Transverse colon (tissue), 4 donors: ENCODE measurements at regions of chr10 and their contacts with region 1.

Region 1: GRCh38 chr10:123213192-123213591 is 59.0 kb downstream of the BUB3 start:
- DNase-seq: no peak
- H3K4me3 ChIP-seq: no peak overlapping the region
- H3K27ac ChIP-seq: no peak overlapping the region
- H3K4me1 ChIP-seq: no peaks in the 10 kb centered on the region
- H3K27me3 ChIP-seq: no peaks in the 10 kb centered on the region
- CTCF ChIP-seq: no peak
- EP300 ChIP-seq: no peak
- POLR2A ChIP-seq: no peak

Region 2: GRCh38 chr10:123166618-123167017 is 46.6 kb before region 1 on chr10:
- in situ Hi-C with region 1: no loop called
- intact Hi-C with region 1: no loop called
- DNase-seq: no peak
- H3K4me3 ChIP-seq: no peak overlapping the region
- H3K27ac ChIP-seq: no peak overlapping the region
- H3K4me1 ChIP-seq: no peaks in the 10 kb centered on the region
- H3K27me3 ChIP-seq: no peaks in the 10 kb centered on the region
- CTCF ChIP-seq: no peak
- EP300 ChIP-seq: no peak
- POLR2A ChIP-seq: no peak

Region 3: DNA sequence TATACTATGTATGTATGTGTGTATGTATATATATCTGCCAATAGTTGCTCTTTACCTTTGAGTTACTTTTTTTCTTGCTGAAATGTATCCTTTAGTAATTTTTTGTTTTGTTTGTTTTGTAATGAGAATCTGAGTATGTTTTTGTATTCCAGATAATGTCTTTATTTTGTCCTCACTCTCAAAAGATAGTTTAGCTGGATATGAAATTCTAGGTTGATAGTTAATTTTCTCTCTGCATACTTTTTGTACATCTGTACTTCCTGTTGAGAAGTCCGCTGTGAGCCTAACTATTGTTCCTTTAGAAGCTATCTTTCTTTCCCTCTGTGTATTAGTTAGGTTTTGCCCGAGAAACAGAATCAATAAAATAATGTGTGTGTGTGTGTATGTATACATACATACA is 29.5 kb before region 1 on chr10:
- in situ Hi-C with region 1: no loop called
- intact Hi-C with region 1: loop called (anchors 2 kb)
- DNase-seq: no peak
- H3K4me3 ChIP-seq: no peak overlapping the region
- H3K27ac ChIP-seq: no peak overlapping the region
- H3K4me1 ChIP-seq: no peaks in the 10 kb centered on the region
- H3K27me3 ChIP-seq: no peaks in the 10 kb centered on the region
- CTCF ChIP-seq: no peak
- EP300 ChIP-seq: no peak
- POLR2A ChIP-seq: no peak

Region 4: DNA sequence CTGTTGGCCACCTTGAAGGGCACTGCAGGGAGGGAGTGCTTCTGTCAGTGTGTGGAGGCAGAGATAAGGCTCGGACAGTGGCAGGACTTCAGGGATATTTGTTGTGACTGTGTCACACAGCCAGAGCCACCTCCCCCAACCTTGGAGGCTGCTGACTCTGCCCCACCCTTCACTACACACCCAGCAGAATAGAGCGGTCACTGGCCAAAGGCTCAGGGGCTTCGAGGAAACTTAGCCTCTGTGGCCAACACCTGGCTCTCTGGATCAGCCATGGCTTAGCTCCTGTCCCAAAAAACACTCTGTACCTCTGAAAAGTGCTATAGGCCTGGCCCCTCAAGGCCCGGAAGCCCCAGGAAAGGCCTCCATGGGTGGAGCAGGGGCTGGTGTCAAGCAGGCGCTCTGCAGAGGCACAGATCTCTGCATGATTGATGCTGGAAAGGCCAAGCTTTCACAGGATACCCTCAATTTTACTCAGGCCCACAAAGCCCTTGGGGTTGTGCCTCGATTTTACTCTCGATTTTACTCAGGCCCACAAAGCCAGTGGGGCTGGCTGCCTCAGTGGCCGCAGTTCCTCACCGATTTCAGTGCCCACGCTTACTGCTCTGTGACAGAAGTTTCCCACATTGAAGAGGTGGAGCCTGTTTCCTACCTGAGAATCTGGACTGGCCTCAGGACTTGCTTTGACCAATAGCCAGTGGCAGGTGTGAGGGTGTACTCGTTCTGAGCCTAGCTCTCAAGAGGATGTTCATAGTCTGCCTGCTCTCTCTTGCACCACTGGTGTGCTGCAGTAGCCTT is 339.8 kb after region 1 on chr10:
- in situ Hi-C with region 1: no loop called
- intact Hi-C with region 1: no loop called
- DNase-seq: no peak
- H3K4me3 ChIP-seq: no peak overlapping the region
- H3K27ac ChIP-seq: no peak overlapping the region
- H3K4me1 ChIP-seq: no peaks in the 10 kb centered on the region
- H3K27me3 ChIP-seq: peaks cover 9% of the 10 kb centered on the region
- CTCF ChIP-seq: no peak
- EP300 ChIP-seq: no peak
- POLR2A ChIP-seq: no peak